ENCODE measurements at regions of chr1 and their contacts with region 1.

Region 1: DNA sequence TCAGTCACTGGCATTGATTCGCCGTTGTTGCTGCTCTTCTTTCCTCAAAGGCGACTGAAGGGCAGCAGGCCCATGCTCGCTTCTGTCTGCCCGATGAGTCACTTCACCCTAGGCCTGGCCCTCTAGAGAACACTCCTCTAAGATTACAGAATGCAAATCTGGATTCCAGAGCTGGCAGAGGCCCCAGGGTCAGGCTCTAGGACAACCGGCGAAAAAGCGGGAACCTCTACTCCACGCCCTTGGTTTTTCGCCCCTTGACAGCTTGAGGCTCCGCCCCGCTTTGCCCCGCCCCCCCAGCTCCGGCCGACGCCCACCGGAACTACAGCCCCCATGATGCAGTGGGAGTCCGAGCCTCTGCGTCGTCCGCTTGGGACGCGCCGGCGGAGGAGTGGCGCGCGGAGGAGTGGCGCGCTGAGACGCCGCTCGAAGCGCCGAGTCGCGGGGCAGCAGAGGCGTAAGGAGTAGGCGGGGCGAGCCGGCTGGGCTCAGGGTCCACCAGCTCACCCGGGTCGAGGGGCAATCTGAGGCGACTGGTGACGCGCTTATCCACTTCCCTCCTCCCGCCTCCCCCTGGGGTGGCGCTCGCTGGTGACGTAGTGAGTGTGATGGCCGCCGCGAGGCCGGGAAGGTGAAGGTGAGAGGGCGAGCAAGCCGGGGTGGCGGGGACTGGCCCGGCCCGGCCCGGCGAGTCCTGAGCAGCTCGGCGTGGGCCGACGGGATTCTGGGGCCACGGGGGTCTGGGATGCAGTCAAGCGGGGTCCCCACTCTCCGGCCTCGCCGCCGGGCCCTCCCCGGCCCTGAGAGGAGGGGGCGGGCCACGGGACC is at the start of gene MFN2:
- DNase-seq: peak; percentile 99
- H3K4me3 ChIP-seq: peak within 1 kb of the TSS; percentile 82 to 98 (median 90)
- H3K27ac ChIP-seq: peak within 1 kb of the TSS; percentile 95 to 99 (median 97)
- H3K4me1 ChIP-seq: peaks cover 42 to 64% (median 63%) of the 10 kb centered on the region in 4 donors
- H3K27me3 ChIP-seq: no peaks in the 10 kb centered on the region
- CTCF ChIP-seq: no peak
- EP300 ChIP-seq: no peak
- POLR2A ChIP-seq: peak; percentile 20
- total RNA-seq, gene MFN2: 166 to 242 (median 191) TPM

Region 2: DNA sequence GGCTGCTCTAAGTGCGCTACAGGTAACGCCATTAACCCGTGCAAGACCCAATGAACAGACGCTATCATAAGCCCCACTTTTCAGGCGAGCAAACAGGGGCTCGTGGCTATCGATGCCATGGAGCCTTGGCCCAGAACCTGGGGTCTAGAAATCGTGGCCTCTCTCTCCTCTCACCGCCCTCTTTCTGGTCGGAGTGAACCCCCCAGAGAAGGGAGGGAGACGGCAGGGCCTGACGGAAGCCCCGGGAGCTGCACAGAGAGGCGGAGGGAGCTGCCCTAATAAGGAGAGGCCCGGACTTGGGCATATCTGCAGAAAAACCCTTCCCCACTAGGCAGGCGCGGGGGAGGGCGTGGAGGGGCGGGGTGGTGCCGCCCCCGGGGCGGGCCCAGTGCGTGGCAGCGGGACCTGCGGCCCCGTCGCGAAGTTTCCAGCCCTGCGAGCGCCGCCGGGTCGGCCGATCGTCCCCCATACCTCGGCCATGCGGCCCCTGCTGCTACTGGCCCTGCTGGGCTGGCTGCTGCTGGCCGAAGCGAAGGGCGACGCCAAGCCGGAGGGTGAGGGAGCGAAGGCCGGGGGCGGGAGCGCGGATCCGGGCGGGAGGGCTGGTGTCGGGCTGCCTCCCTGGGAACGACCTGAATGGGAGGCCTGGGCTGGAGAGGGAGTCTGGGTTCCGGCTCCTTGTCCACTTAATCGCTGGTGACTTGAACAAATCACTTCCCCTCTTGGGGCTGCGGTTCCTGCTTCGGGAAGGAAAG is 45.6 kb before region 1 on chr1 and contains the start of gene PLOD1:
- intact Hi-C with region 1: loop called (anchors 5 kb)
- DNase-seq: peak; percentile 97
- H3K4me3 ChIP-seq: peak within 1 kb of the TSS; percentile 66 to 87 (median 80)
- H3K27ac ChIP-seq: peak within 1 kb of the TSS; percentile 87 to 93 (median 92)
- H3K4me1 ChIP-seq: peaks cover 57 to 77% (median 76%) of the 10 kb centered on the region in 4 donors
- H3K27me3 ChIP-seq: no peaks in the 10 kb centered on the region
- CTCF ChIP-seq: no peak
- EP300 ChIP-seq: no peak
- POLR2A ChIP-seq: no peak
- total RNA-seq, gene PLOD1: 67.5 to 111 (median 75.0) TPM

Region 3: DNA sequence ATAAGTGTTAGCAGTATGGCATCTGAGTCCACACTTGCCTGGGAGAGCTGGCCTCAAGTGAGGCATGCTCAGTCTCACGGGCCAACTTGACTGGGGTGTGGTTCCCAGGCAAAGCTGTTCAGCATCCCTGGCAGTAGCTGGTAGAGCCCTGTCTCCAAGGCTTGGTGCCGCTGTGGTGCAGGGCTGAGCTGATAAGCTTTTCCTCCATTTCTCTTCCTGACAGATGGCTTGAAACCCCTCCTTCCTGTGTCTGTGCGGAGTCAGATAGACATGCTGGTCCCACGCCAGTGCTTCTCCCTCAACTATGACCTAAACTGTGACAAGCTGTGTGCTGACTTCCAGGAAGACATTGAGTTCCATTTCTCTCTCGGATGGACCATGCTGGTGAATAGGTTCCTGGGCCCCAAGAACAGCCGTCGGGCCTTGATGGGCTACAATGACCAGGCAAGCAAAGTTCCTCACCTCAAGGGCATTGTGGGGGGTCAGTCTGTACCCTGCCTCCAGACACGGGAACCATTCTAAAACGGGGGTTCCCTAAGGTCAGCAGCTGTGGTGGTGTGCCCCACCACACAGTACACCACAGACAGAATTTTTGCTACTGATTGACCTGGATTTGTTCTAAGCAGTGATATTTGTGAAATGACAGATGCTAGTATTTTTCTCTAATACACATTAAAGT is 25.6 kb after region 1 on chr1:
- intact Hi-C with region 1: loop called (anchors 2 kb)
- DNase-seq: no peak
- H3K4me3 ChIP-seq: no peak overlapping the region
- H3K27ac ChIP-seq: no peak overlapping the region
- H3K4me1 ChIP-seq: peaks cover 0 to 4% (median 0%) of the 10 kb centered on the region in 4 donors
- H3K27me3 ChIP-seq: no peaks in the 10 kb centered on the region
- CTCF ChIP-seq: no peak
- EP300 ChIP-seq: no peak
- POLR2A ChIP-seq: no peak

Measured in esophagus muscularis mucosa (tissue), 4 donors.